ENCODE measurements at regions of chr4 and their contacts with region 1.

Region 1: DNA sequence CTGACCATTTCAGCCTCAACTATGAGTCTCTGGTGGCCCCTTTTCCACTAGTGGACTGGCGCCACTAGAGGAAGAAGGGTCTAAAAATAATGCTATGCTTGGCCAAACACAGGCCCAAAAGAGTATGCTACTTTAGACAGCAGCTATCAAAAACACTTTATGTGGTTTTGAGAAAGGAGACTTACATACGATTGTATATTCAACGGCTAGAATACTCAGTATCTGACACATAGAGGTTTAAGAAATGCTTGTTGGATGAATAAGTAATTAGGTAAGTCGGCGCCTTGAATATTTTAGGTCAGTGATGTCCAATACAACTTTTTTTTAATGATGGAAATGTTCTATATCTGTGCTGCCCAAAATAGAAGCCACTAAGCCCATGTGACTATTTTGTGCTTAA is 25.7 kb upstream of the TMPRSS11A start:
- DNase-seq: no peak
- ATAC-seq: no peak

Region 2: DNA sequence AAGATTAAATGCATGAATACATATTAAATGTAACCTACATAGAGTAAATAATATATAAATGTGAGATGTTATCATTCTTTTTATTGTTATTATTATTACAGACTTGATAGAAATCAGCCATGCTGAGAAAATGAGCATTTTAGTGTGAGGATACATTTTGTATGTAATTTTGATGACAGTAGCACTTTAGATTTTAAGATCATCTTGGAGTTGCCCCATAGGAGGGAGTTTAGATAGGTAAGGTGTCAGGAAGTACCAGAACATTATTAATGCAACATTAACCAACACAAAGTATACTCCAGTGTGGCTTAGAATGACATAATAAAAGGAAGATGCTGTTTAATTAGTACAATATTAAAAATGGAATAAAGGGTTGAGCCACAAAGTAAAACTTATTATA is 34.1 kb before region 1 on chr4:
- intact Hi-C with region 1: no loop called
- DNase-seq: no peak
- ATAC-seq: no peak

Region 3: DNA sequence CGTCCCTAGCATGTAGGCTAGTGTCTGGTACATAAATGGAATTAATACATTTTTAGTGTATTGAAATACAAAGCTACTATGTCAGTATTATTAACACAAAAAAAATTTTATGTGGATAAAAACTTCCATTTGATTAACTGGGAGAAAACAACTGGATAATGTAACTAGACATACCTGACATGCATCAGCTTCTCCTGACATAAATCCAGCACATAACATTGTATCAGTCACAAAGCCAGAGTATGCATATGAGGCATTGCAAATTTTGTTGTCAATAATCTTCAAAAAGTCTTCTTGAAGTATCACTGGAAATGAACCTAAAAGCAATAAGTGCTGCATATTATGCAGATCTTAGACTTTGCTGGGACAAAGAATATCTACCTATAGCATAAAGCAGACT is 239.6 kb after region 1 on chr4:
- intact Hi-C with region 1: no loop called
- DNase-seq: no peak
- ATAC-seq: no peak

Region 4: GRCh38 chr4:68599150-68599549 is 610.2 kb after region 1 on chr4:
- intact Hi-C with region 1: loop called (anchors 5 kb)
- DNase-seq: no peak
- ATAC-seq: no peak

Measured in Right ventricle myocardium inferior (tissue), 1 donor.